ENCODE measurements at regions of chr14 and their contacts with region 1.

Region 1: GRCh38 chr14:55579724-55580469 is at the start of gene KTN1:
- DNase-seq: peak; percentile 89 to 92 (median 90)
- ATAC-seq: peak; percentile 89 to 95 (median 92)
- H3K4me3 ChIP-seq: peak within 1 kb of the TSS; percentile 78 to 98 (median 91)
- H3K27ac ChIP-seq: peak within 1 kb of the TSS; percentile 93 to 99 (median 97)
- H3K4me1 ChIP-seq: peaks cover 3 to 50% (median 37%) of the 10 kb centered on the region in 12 donors
- H3K27me3 ChIP-seq: no peaks in the 10 kb centered on the region
- CTCF ChIP-seq: no peak
- POLR2A ChIP-seq: peak in 1 of 2 donors; percentile 28
- total RNA-seq, gene KTN1: 174 to 340 (median 252) TPM

Region 2: GRCh38 chr14:55270832-55271565 is 308.9 kb before region 1 on chr14 and contains the start of gene FBXO34:
- intact Hi-C with region 1: loop called in 1 of 10 experiments (anchors 5 kb)
- DNase-seq: peak; percentile 98 to 100 (median 99)
- ATAC-seq: peak; percentile 90 to 94 (median 92)
- H3K4me3 ChIP-seq: peak within 1 kb of the TSS; percentile 70 to 99 (median 95)
- H3K27ac ChIP-seq: peak within 1 kb of the TSS; percentile 81 to 97 (median 93)
- H3K4me1 ChIP-seq: peaks cover 0 to 40% (median 27%) of the 10 kb centered on the region in 12 donors
- H3K27me3 ChIP-seq: no peaks in the 10 kb centered on the region
- CTCF ChIP-seq: peak; percentile 98 to 100 (median 99)
- POLR2A ChIP-seq: peak; percentile 34 to 96
- total RNA-seq, gene FBXO34: 17.1 to 33.4 (median 21.1) TPM

Region 3: GRCh38 chr14:55446218-55446654 is 133.7 kb before region 1 on chr14:
- intact Hi-C with region 1: loop called in 8 of 10 experiments (anchors 5 to 10 kb)
- DNase-seq: peak in 4 of 5 donors; percentile 40 to 62 (median 52)
- ATAC-seq: peak in 3 of 4 donors; percentile 67 to 70 (median 68)
- H3K4me3 ChIP-seq: no peak overlapping the region
- H3K27ac ChIP-seq: peak overlapping the region in 3 of 12 donors; percentile 30 to 57 (median 34)
- H3K4me1 ChIP-seq: peaks cover 0 to 22% (median 4%) of the 10 kb centered on the region in 12 donors
- H3K27me3 ChIP-seq: no peaks in the 10 kb centered on the region
- CTCF ChIP-seq: peak; percentile 56 to 72 (median 64)
- POLR2A ChIP-seq: no peak

Region 4: GRCh38 chr14:55556929-55557623 is 22.8 kb before region 1 on chr14:
- intact Hi-C with region 1: loop called in 1 of 10 experiments (anchors 2 kb)
- DNase-seq: peak; percentile 80 to 93 (median 86)
- ATAC-seq: peak; percentile 96 to 98 (median 98)
- H3K4me3 ChIP-seq: no peak overlapping the region
- H3K27ac ChIP-seq: peak overlapping the region in 5 of 12 donors; percentile 10 to 39 (median 27)
- H3K4me1 ChIP-seq: peaks cover 0 to 12% (median 0%) of the 10 kb centered on the region in 12 donors
- H3K27me3 ChIP-seq: no peaks in the 10 kb centered on the region
- CTCF ChIP-seq: no peak
- POLR2A ChIP-seq: no peak

Region 5: GRCh38 chr14:55624913-55625312 is 45.0 kb after region 1 on chr14:
- intact Hi-C with region 1: loop called in 3 of 10 experiments (anchors 5 kb)
- DNase-seq: no peak
- ATAC-seq: peak in 1 of 4 donors; percentile 33
- H3K4me3 ChIP-seq: no peak overlapping the region
- H3K27ac ChIP-seq: no peak overlapping the region
- H3K4me1 ChIP-seq: peaks cover 0 to 35% (median 10%) of the 10 kb centered on the region in 12 donors
- H3K27me3 ChIP-seq: no peaks in the 10 kb centered on the region
- CTCF ChIP-seq: no peak
- POLR2A ChIP-seq: no peak

Region 6: DNA sequence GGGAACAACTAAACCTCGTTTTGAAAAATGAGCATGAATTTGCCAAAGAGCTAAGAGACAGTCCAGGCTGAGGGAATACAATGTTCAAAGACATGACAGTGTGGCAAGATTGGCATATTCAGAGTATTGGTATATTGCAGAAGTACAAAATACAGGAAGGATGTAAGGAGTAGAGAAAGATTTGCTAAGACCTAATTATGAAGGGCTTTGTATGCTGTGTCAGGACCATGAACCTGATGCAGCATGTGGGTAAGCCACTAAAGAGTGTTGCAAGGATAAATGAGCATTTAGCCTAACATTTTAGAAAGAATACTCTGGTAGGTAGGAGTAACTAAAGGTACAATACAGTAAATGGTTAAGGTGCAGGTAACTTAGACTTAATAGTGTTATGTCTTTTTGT is 65.2 kb after region 1 on chr14:
- intact Hi-C with region 1: loop called in 2 of 10 experiments (anchors 10 kb)
- DNase-seq: no peak
- ATAC-seq: peak in 1 of 4 donors; percentile 15
- H3K4me3 ChIP-seq: no peak overlapping the region
- H3K27ac ChIP-seq: no peak overlapping the region
- H3K4me1 ChIP-seq: peaks cover 0 to 35% (median 10%) of the 10 kb centered on the region in 12 donors
- H3K27me3 ChIP-seq: no peaks in the 10 kb centered on the region
- CTCF ChIP-seq: no peak
- POLR2A ChIP-seq: no peak

Region 7: GRCh38 chr14:55671641-55672040 is 91.7 kb after region 1 on chr14:
- intact Hi-C with region 1: loop called in 1 of 10 experiments (anchors 10 kb)
- DNase-seq: no peak
- ATAC-seq: no peak
- H3K4me3 ChIP-seq: no peak overlapping the region
- H3K27ac ChIP-seq: no peak overlapping the region
- H3K4me1 ChIP-seq: peaks cover 0 to 11% (median 0%) of the 10 kb centered on the region in 12 donors
- H3K27me3 ChIP-seq: no peaks in the 10 kb centered on the region
- CTCF ChIP-seq: no peak
- POLR2A ChIP-seq: no peak

Measured in heart left ventricle (tissue), 16 donors.